ENCODE measurements at regions of chr7 and their contacts with region 1.

Region 1: DNA sequence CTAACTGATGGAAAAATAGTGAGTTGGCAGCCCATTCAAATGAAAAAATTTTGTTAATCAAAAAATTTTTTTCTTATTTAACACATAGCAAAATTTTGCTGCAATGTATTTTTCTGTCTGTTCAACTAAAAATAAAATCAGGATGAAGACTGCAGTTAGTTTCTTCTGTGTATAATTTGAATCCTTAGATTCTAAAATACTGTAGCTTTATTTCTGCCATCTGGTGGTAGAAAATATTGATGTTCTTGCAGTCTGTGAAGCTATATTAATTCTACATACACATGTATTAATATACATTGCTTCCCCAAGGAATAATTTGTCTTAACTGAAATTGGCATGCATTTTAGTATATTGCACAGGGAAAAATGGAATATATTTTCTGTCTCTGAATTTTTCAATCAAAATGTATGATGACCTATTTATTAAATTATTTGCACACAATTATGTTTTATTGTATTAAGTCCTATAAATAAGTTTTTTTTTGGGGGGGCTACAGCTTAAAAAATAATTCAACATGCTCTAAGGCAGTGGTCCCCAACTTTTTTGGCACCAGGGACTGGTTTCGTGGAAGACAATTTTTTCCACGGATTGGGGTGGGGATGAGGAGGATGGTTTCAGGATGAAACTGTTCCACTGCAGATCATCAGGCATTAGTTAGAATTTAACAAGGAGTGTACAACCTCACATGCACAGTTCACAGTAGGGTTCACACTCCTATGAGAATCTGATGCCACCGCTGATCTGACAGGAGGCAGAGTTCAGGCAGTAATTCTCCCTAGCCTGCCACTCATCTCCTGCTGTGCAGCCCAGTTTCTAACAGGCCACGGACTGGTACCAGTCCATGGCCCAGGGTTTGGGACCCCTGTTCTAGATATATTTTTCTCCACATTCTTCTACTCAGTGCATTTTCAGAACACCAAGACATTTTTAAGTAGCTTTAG is 119.4 kb downstream of the GNAT3 start:
- DNase-seq: no peak
- ATAC-seq: peak in 3 of 4 donors; percentile 48 to 68 (median 54)
- H3K4me3 ChIP-seq: no peak overlapping the region
- H3K27ac ChIP-seq: no peak overlapping the region
- H3K4me1 ChIP-seq: no peaks in the 10 kb centered on the region
- H3K27me3 ChIP-seq: no peaks in the 10 kb centered on the region
- CTCF ChIP-seq: peak in 1 of 4 donors; percentile 31

Region 2: GRCh38 chr7:80095545-80095944 is 297.0 kb before region 1 on chr7:
- intact Hi-C with region 1: loop called in 1 of 3 experiments (anchors 10 kb)
- DNase-seq: no peak
- ATAC-seq: peak in 3 of 4 donors; percentile 43 to 61 (median 50)
- H3K4me3 ChIP-seq: no peak overlapping the region
- H3K27ac ChIP-seq: no peak overlapping the region
- H3K4me1 ChIP-seq: no peaks in the 10 kb centered on the region
- H3K27me3 ChIP-seq: no peaks in the 10 kb centered on the region
- CTCF ChIP-seq: peak in 3 of 4 donors; percentile 19 to 37 (median 22)

Region 3: GRCh38 chr7:80134536-80135320 is 257.8 kb before region 1 on chr7 and contains the start of gene GNAI1:
- intact Hi-C with region 1: loop called in 1 of 3 experiments (anchors 10 kb)
- DNase-seq: peak; percentile 43 to 87 (median 72)
- ATAC-seq: peak; percentile 82 to 88 (median 84)
- H3K4me3 ChIP-seq: peak within 1 kb of the TSS; percentile 62 to 91 (median 67)
- H3K27ac ChIP-seq: peak within 1 kb of the TSS; percentile 16 to 85 (median 76)
- H3K4me1 ChIP-seq: peaks cover 0 to 13% (median 10%) of the 10 kb centered on the region in 3 donors
- H3K27me3 ChIP-seq: no peaks in the 10 kb centered on the region
- CTCF ChIP-seq: peak in 1 of 4 donors; percentile 13
- total RNA-seq, gene GNAI1: 3.0 to 8.6 (median 4.9) TPM

Region 4: GRCh38 chr7:80722616-80723141 is 330.2 kb after region 1 on chr7:
- intact Hi-C with region 1: no loop called
- DNase-seq: peak in 1 of 6 donors; percentile 15
- ATAC-seq: peak in 3 of 4 donors; percentile 56 to 83 (median 74)
- H3K4me3 ChIP-seq: no peak overlapping the region
- H3K27ac ChIP-seq: no peak overlapping the region
- H3K4me1 ChIP-seq: no peaks in the 10 kb centered on the region
- H3K27me3 ChIP-seq: no peaks in the 10 kb centered on the region
- CTCF ChIP-seq: no peak

Measured in pancreas (tissue), 10 donors.